A549 (cell line): ENCODE measurements at regions of chr7 and their contacts with region 1.

Region 1: GRCh38 chr7:127253281-127254162 is 781 bp upstream of the GRM8 start:
- DNase-seq: peak; percentile 62 to 63
- ATAC-seq: peak; percentile 80 to 93
- H3K4me3 ChIP-seq: peak overlapping the region; percentile 56
- H3K27ac ChIP-seq: peak overlapping the region; percentile 41 to 76
- H3K4me1 ChIP-seq: peaks cover 14% of the 10 kb centered on the region
- CTCF ChIP-seq: peak; percentile 68
- EP300 ChIP-seq: no peak
- POLR2A ChIP-seq: no peak
- RAD21 ChIP-seq: peak; percentile 60 to 71

Region 2: GRCh38 chr7:127107601-127108007 is 145.9 kb before region 1 on chr7:
- CTCF ChIA-PET with region 1: interaction called, 12 read pairs
- POLR2A ChIA-PET with region 1: no interaction called
- DNase-seq: peak; percentile 30 to 66
- ATAC-seq: peak; percentile 92 to 97
- H3K4me3 ChIP-seq: no peak overlapping the region
- H3K27ac ChIP-seq: no peak overlapping the region
- H3K4me1 ChIP-seq: no peaks in the 10 kb centered on the region
- CTCF ChIP-seq: peak; percentile 54
- EP300 ChIP-seq: no peak
- POLR2A ChIP-seq: no peak
- RAD21 ChIP-seq: peak; percentile 29 to 32; a peak in 3 of 5 replicates